Activated naive CD4-positive, alpha-beta T cell treated with anti-CD3 and anti-CD28 coated beads for 36 hours (primary cell): ENCODE measurements at regions of chr7 and their contacts with region 1.

Region 1: DNA sequence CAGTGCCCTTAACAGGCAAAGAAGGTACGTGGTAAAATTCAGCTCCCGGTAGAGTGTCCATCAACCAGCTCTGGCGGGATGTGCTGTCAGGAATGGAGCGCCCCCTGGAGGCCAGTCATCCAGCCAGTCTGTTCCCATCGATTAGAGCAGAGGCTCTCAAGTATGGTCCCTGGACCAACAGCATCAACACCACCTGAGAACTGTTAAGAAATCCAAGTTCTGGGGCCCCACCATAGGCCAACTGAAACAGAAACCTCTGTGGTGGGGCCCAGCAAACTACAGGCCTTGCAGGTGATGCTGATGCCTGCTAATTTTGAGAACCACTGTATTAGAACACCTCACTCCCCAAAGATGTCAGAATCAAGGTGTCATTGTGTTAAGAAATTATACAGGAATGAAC is 109.2 kb downstream of the DPY19L1 start:
- DNase-seq: peak; percentile 62
- H3K4me3 Mint-ChIP-seq: no peak overlapping the region
- H3K27ac Mint-ChIP-seq: no peak overlapping the region
- H3K4me1 Mint-ChIP-seq: no peaks in the 10 kb centered on the region
- H3K27me3 Mint-ChIP-seq: peaks cover 7% of the 10 kb centered on the region

Region 2: GRCh38 chr7:34247468-34247867 is 680.6 kb before region 1 on chr7:
- CTCF ChIA-PET with region 1: no interaction called
- intact Hi-C with region 1: no loop called
- DNase-seq: no peak
- H3K4me3 Mint-ChIP-seq: no peak overlapping the region
- H3K27ac Mint-ChIP-seq: no peak overlapping the region
- H3K4me1 Mint-ChIP-seq: no peaks in the 10 kb centered on the region
- H3K27me3 Mint-ChIP-seq: no peaks in the 10 kb centered on the region

Region 3: GRCh38 chr7:34675749-34676374 is 252.2 kb before region 1 on chr7:
- CTCF ChIA-PET with region 1: no interaction called
- intact Hi-C with region 1: loop called (anchors 10 kb)
- DNase-seq: peak; percentile 37
- H3K4me3 Mint-ChIP-seq: no peak overlapping the region
- H3K27ac Mint-ChIP-seq: no peak overlapping the region
- H3K4me1 Mint-ChIP-seq: no peaks in the 10 kb centered on the region
- H3K27me3 Mint-ChIP-seq: peaks cover 4% of the 10 kb centered on the region

Region 4: GRCh38 chr7:34759452-34760125 is 168.5 kb before region 1 on chr7:
- CTCF ChIA-PET with region 1: no interaction called
- intact Hi-C with region 1: loop called (anchors 10 kb)
- DNase-seq: no peak
- H3K4me3 Mint-ChIP-seq: no peak overlapping the region
- H3K27ac Mint-ChIP-seq: no peak overlapping the region
- H3K4me1 Mint-ChIP-seq: no peaks in the 10 kb centered on the region
- H3K27me3 Mint-ChIP-seq: peaks cover 18% of the 10 kb centered on the region

Region 5: DNA sequence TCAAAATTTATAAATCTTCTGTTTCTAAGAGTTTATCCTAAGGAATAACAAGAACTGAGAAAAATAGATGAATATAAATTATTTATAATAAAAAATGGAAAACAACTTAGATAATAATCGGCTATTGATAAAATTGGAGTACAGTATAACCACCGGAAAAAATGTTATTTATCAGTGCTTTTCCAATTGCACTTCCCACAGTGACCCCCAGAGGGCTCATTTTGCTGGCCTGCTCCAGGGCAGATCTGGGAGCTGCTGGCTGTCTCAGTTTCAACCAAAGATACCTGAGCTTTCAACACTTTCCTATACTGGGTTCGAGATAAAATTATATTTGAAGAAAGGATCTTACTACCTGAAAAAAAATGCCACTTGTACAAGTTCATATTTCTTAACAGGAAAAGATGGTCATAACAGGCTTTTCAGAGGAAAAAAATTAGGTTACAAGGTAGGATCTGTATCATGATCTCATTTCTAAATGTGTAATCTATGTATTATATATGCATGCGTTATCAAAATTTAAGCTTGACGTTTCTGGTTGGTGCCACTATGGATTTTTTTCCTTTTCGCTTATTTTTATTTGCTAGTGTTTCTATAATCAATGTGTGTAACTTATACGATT is 104.3 kb before region 1 on chr7:
- CTCF ChIA-PET with region 1: interaction called, 3 read pairs
- intact Hi-C with region 1: loop called (anchors 10 kb)
- DNase-seq: peak; percentile 73
- H3K4me3 Mint-ChIP-seq: no peak overlapping the region
- H3K27ac Mint-ChIP-seq: no peak overlapping the region
- H3K4me1 Mint-ChIP-seq: no peaks in the 10 kb centered on the region
- H3K27me3 Mint-ChIP-seq: peaks cover 4% of the 10 kb centered on the region

Region 6: GRCh38 chr7:35015331-35015859 is 87.3 kb after region 1 on chr7:
- CTCF ChIA-PET with region 1: no interaction called
- intact Hi-C with region 1: no loop called
- DNase-seq: no peak
- H3K4me3 Mint-ChIP-seq: no peak overlapping the region
- H3K27ac Mint-ChIP-seq: no peak overlapping the region
- H3K4me1 Mint-ChIP-seq: no peaks in the 10 kb centered on the region
- H3K27me3 Mint-ChIP-seq: no peaks in the 10 kb centered on the region